Caco-2 (cell line): ENCODE measurements at regions of chr3 and their contacts with region 1.

Region 1: GRCh38 chr3:69324362-69325025 is 61.4 kb downstream of the FRMD4B start:
- DNase-seq: peak in 1 of 2 experiments; percentile 27
- H3K4me3 ChIP-seq: no peak overlapping the region
- H3K4me3 Mint-ChIP-seq: no peak overlapping the region
- H3K27ac Mint-ChIP-seq: peak overlapping the region; percentile 81
- H3K4me1 ChIP-seq: peaks cover 49% of the 10 kb centered on the region
- H3K4me1 Mint-ChIP-seq: peaks cover 30% of the 10 kb centered on the region
- H3K27me3 ChIP-seq: no peaks in the 10 kb centered on the region
- H3K27me3 Mint-ChIP-seq: no peaks in the 10 kb centered on the region
- CTCF ChIP-seq: peak; percentile 50 to 52

Region 2: DNA sequence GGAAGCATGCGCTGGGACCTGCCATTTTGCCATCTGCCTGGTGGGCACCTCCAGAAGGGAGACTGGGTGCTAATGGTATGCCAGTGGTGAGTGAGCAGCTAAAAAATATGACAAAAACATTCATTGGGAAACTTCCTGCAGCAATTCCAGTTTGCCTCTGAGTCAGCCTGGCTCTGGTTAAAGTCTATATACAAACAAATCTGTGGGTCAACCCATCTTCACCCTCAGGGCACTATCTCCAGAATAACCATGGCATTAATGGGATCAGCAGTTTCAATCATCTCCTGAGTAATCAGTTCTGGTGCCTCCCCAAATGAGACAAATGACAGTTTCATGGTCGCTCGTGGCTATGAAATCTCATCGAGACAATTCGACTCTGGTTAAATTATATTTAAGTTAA is 39.9 kb after region 1 on chr3:
- CTCF ChIA-PET with region 1: no interaction called
- POLR2A ChIA-PET with region 1: no interaction called
- intact Hi-C with region 1: no loop called
- DNase-seq: no peak
- H3K4me3 ChIP-seq: no peak overlapping the region
- H3K4me3 Mint-ChIP-seq: no peak overlapping the region
- H3K27ac Mint-ChIP-seq: no peak overlapping the region
- H3K4me1 ChIP-seq: no peaks in the 10 kb centered on the region
- H3K4me1 Mint-ChIP-seq: no peaks in the 10 kb centered on the region
- H3K27me3 ChIP-seq: no peaks in the 10 kb centered on the region
- H3K27me3 Mint-ChIP-seq: no peaks in the 10 kb centered on the region
- CTCF ChIP-seq: no peak

Region 3: DNA sequence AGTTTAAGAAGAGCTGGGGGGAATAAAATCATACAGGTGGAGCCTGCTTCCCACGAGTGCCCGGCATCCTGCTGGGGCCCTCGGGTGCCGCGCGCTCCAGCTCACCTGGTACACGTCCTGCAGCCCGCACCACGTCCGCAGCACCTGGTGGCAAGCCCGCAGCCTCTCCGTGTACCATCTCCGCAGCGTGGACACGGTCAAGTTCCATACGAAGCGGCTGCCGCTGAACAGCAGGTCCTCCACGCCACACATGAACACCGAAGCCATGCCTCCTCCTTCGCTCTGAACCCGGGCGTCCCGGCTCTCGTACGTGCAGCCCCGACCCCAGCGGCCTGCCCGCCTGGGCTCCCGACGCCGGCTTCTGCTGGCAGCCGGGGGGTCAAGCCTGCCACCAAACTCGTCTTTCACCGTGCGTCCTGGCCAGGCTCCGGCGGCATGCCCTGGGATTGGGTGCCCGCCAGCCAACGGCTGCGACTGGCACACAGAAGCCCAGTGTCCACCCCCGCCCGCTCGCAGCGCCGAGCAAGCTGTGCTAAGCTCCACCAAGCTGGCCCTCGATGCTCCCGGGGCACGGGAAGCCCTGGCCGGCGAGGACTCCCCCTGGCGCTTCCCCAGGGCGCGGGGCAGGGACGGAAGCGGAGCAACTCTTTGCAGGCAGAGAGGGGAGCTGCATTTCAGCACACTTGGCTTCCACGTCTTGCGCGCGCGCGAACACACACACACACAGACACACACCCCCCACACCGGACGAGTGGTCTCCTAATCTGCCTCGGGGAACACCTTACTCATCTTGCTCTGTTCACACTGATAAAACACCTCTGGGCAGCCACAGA is 61.4 kb after region 1 on chr3 and contains the start of gene FRMD4B:
- CTCF ChIA-PET with region 1: interaction called, 6 read pairs
- POLR2A ChIA-PET with region 1: no interaction called
- intact Hi-C with region 1: loop called (anchors 1 kb)
- DNase-seq: peak; percentile 59 to 82
- H3K4me3 ChIP-seq: peak within 1 kb of the TSS; percentile 46
- H3K4me3 Mint-ChIP-seq: peak within 1 kb of the TSS; percentile 76
- H3K27ac Mint-ChIP-seq: no peak within 1 kb of the TSS
- H3K4me1 ChIP-seq: peaks cover 5% of the 10 kb centered on the region; the same call in 1 of the 2 replicates
- H3K4me1 Mint-ChIP-seq: no peaks in the 10 kb centered on the region
- H3K27me3 ChIP-seq: peaks cover 1% of the 10 kb centered on the region; the same call in 1 of the 2 replicates
- H3K27me3 Mint-ChIP-seq: no peaks in the 10 kb centered on the region
- CTCF ChIP-seq: peak in 1 of 2 experiments; percentile 78
- total RNA-seq, gene FRMD4B: 43.2 and 47.5 TPM in 2 replicates

Region 4: DNA sequence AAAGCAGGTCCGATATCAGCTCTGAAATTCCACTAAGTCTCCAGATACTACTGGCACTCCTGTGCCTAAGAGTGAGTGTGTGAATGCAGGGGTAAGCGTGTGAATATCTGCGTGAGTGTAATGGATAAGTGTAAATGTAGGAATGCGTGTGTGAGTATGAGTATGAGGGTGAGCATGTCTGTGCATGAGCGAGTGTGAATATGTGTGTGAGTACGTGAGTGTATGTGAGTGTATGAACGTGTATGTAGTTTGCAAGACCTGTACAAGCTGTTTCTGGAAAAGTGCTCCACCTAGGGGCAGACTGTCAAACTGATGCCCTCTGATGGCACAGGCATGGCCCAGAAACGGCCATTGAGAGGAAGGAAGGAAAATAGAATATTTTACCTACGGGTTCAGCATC is 85.8 kb after region 1 on chr3:
- CTCF ChIA-PET with region 1: no interaction called
- POLR2A ChIA-PET with region 1: no interaction called
- intact Hi-C with region 1: loop called (anchors 1 kb)
- DNase-seq: peak; percentile 71 to 76
- H3K4me3 ChIP-seq: no peak overlapping the region
- H3K4me3 Mint-ChIP-seq: peak overlapping the region; percentile 8
- H3K27ac Mint-ChIP-seq: no peak overlapping the region
- H3K4me1 ChIP-seq: no peaks in the 10 kb centered on the region
- H3K4me1 Mint-ChIP-seq: no peaks in the 10 kb centered on the region
- H3K27me3 ChIP-seq: no peaks in the 10 kb centered on the region
- H3K27me3 Mint-ChIP-seq: no peaks in the 10 kb centered on the region
- CTCF ChIP-seq: peak; percentile 72 to 88

Region 5: GRCh38 chr3:69671082-69671952 is 346.8 kb after region 1 on chr3:
- CTCF ChIA-PET with region 1: no interaction called
- POLR2A ChIA-PET with region 1: no interaction called
- intact Hi-C with region 1: loop called (anchors 5 kb)
- DNase-seq: peak in 1 of 2 experiments; percentile 49
- H3K4me3 ChIP-seq: no peak overlapping the region
- H3K4me3 Mint-ChIP-seq: no peak overlapping the region
- H3K27ac Mint-ChIP-seq: no peak overlapping the region
- H3K4me1 ChIP-seq: no peaks in the 10 kb centered on the region
- H3K4me1 Mint-ChIP-seq: no peaks in the 10 kb centered on the region
- H3K27me3 ChIP-seq: no peaks in the 10 kb centered on the region; the same call in 1 of the 2 replicates
- H3K27me3 Mint-ChIP-seq: no peaks in the 10 kb centered on the region
- CTCF ChIP-seq: peak; percentile 58 to 67